ENCODE measurements at regions of chr4 and their contacts with region 1.

Region 1: DNA sequence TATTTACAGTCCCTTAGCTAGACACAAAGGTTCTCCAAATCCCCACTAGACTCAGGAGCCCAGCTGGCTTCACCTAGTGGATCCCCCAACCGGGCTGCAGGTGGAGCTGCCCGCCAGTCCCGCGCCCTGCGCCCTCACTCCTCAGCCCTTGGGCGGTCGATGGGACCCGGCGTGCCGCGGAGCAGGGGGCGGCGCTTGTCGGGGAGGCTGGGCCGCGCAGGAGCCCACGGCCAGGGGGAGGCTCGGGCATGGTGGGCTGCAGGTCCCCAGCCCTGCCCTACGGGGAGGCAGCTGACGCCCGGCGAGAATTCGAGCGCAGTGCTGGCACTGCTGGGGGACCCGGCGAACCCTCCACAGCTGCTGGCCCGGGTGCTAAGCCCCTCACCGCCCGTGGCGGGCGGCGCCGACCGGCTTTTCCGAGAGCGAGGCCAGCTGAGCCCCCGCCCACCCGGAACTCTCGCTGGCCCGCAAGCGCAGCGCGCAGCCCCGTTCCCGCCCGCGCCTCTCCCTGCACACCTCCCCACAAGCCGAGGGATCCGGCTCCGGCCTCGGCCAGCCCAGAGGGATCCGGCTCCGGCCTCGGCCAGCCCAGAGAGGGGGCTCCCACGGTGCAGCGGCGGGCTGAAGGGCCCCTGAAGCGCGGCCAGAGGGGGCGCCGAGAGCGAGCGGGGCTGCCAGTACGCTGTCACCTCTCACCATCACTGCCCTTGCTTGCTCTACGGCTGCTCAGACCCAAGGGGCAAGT is 39.4 kb downstream of the WFS1 start:
- DNase-seq: peak; percentile 40
- H3K4me3 Mint-ChIP-seq: peak overlapping the region; percentile 53
- H3K27ac Mint-ChIP-seq: no peak overlapping the region
- H3K4me1 Mint-ChIP-seq: no peaks in the 10 kb centered on the region
- H3K27me3 Mint-ChIP-seq: peaks cover 19% of the 10 kb centered on the region
- CTCF ChIP-seq: no peak

Region 2: DNA sequence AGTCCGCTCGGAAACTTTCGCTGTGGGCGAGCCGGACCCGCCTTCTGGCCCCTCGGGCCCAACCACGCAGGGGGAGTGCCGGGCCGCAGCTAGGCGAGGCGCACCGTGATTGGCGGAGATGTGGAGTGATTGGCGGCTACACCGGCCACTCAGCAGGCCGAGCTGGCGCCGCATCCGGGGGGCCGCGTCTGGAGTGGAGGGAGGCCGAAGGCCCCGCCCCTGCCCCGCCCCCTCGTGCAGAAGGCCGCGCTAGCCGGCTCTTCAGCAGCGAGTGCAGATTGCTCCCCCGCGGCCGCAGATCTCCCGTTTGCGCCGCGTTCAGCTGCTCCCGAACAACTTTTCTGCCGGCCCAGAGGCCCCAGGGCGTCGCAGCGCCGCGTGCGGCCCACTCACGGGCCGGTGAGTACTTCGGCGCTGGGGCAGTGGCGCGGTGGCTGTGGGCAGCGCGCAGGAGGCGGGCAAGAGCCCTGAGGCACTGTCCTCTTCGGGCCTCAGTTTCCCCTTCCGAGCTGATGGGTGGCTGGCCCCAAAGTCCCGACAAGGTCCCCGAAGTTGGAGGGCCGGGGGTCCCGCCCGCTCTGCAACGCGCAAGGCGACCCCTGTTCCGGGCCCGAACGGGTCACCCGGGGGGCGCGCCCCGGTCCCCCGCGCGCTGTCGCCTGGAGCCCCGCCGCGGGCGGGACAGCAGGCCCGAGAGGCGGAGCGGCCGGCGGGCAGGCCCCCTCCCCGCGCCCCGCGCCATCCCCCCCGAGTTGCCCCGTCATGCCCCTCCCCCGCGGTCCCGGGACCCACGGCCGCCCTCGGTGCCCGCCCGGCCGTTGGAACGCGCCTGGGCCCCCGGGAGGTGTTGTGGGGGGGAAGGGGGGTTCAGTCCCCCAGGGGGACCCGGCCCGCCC is 39.2 kb before region 1 on chr4 and contains the start of gene WFS1:
- CTCF ChIA-PET with region 1: interaction called, 3 read pairs
- intact Hi-C with region 1: loop called (anchors 5 kb)
- DNase-seq: peak; percentile 95
- H3K4me3 Mint-ChIP-seq: peak within 1 kb of the TSS; percentile 75
- H3K27ac Mint-ChIP-seq: peak within 1 kb of the TSS; percentile 44
- H3K4me1 Mint-ChIP-seq: peaks cover 18% of the 10 kb centered on the region
- H3K27me3 Mint-ChIP-seq: peaks cover 37% of the 10 kb centered on the region
- CTCF ChIP-seq: no peak
- total RNA-seq, gene WFS1: 21.6 and 23.4 TPM in 2 replicates

Measured in Calu3 (cell line).